Activated naive CD4-positive, alpha-beta T cell treated with anti-CD3 and anti-CD28 coated beads, Interleukin-2, amount 10 ng/mL, durations not matched to agents 7 days and 5 days (primary cell): ENCODE measurements at regions of chr12 and their contacts with region 1.

Region 1: DNA sequence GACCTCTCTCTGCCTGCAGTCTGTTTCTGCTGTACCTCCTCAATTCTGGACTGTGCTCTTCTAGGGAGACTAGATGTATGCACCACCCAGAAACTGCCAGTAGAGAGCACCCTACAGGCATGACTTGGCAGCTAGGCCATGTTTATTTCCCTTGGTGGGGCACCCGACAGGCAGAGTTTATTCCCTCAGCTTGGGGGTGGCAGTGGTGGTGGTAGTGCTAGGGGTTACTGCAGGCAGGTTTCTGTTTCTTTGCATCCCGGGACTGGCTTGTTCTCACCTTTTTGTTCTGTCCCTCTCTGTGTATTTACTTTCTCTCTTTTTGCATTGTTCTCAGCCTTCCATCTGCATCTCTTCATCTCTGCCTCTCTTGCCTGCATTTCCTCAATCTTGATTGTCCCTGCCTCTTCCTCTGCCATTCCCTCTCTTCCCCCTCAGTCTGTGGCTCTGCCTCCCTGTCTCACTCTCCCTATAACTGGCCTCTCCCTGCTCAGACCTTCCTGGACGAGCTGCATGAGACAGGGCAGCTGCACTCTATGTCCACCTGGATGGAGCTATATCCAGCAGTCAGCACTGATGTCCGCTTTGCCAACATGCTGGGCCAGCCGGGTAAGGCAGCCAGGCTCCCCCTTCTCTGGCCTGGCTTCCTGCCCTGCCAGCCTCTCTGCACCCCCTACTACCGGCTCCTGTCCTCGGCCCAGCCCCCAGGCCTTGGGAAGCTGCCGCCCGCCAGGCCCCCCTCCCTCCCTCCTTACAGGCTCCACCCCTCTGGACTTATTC is 13.8 kb downstream of the PRPF40B start:
- DNase-seq: peak; percentile 79
- H3K4me3 Mint-ChIP-seq: no peak overlapping the region
- H3K27ac Mint-ChIP-seq: no peak overlapping the region
- H3K4me1 Mint-ChIP-seq: peaks cover 7% of the 10 kb centered on the region
- H3K27me3 Mint-ChIP-seq: no peaks in the 10 kb centered on the region

Region 2: DNA sequence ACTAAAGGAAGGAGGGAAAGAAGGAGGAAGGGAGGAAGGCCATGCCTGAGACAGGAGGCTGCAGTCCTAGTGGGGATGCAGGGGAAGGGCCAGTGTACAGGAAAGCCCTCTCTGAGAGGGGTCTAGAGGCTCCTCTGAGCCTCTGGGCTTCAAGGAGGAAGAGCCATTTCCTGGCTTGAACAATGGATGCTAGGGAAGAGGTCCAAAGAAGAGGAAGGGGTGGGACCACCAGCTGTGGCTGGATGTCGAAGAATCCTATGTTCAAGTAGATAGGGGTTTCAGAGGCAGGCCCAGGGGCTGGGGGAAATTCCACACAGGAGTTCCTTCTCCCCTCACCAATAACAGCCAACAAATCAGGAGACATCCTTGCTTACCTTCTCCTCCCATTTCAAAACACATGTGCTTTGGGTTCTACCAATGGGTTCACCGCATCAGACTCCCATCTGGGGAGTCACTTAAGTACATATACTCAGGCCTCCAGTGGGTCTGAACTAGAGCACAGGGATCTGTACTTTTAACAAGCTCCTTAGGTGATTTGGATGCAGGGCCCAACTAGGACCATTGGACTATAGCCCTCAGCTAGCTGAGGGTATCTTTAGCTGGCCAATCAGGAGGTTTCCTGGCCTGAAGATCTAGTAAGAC is 18.5 kb after region 1 on chr12:
- CTCF ChIA-PET with region 1: interaction called, 12 read pairs
- DNase-seq: no peak
- H3K4me3 Mint-ChIP-seq: no peak overlapping the region
- H3K27ac Mint-ChIP-seq: peak overlapping the region; percentile 3
- H3K4me1 Mint-ChIP-seq: peaks cover 28% of the 10 kb centered on the region
- H3K27me3 Mint-ChIP-seq: no peaks in the 10 kb centered on the region

Region 3: DNA sequence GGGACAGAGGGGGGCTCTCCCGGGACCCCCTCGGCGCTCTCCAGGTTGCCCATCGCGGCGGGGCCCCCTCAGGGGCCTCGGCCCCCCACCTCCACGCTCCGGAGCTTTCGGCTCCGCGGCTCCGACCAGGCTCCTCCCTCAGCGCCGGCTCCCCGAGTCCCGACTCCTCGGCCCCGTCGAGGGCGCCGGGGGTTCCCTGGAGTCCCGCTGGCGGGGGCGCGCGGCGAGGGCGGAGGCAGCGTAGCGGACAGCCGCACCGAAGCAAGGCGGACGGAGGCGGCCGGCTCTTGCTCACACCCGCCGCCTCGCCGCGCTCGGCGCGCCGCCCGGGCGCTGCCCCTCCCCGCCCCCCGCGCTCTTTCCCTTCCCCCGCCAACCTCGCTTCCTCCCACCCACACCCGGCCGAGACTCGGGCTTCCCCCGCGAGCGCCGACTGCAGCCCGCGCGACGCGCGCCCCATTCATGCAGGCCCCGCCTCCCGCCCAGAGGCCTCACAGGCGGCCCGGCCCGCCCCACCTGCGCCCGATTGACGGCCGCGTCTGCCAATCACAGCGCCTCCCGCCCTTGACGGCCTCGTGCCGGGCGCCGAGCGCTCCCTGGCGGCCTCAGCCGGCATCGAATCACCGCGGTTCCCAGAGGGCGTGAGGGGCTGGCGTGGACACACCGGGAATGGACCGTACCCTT is 70.1 kb after region 1 on chr12 and contains the start of gene FMNL3:
- CTCF ChIA-PET with region 1: interaction called, 370 read pairs
- DNase-seq: peak; percentile 98
- H3K4me3 Mint-ChIP-seq: peak within 1 kb of the TSS; percentile 92
- H3K27ac Mint-ChIP-seq: peak within 1 kb of the TSS; percentile 66
- H3K4me1 Mint-ChIP-seq: peaks cover 43% of the 10 kb centered on the region
- H3K27me3 Mint-ChIP-seq: peaks cover 44% of the 10 kb centered on the region

Region 4: DNA sequence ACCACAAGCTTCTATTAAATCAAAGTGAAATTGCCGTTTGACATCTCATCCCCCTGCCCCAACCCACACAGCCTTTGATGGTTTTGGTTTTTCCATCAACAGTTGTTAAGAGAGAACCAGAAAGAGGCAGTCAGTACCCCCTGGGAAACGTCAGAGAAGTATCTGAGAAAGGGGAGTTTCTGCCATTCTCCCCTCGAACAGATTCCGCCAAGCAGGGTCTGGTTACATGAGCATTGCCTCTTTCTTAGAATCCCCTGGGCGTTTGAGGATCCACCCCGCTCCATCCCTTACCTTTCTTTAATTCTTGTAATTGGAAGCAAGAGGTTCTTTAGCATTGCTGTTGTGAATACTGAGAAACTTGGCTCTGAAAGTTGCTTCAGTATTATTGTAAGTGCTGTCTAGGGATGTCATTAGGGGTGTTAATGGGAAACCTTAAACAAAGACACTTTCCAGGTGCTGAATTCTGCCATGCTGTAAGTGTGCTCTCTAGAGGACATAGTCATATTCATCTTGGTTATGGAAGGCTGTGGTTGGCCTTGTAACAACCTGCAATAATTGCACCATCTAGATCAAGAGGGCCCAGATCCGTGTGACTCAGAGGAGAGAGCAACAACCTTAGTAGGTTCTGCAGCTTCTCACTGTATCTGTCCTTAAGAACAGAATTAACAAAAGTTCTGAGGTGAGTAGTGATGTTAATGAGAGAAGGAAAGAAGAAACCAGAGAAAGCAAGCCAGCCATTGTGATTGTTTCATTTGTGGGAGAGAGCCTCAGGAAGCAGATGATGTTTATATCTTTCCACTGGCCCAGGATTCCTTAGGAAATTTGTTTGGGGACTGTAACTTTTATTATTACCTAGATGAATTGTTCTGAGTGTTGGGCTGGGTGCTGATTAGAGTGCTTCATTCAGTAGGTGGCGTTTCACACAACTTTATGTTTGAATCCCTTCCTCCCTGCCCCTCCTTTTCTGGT is 113.1 kb after region 1 on chr12:
- CTCF ChIA-PET with region 1: interaction called, 10 read pairs
- DNase-seq: peak; percentile 37
- H3K4me3 Mint-ChIP-seq: peak overlapping the region; percentile 10
- H3K27ac Mint-ChIP-seq: peak overlapping the region; percentile 78
- H3K4me1 Mint-ChIP-seq: peaks cover 66% of the 10 kb centered on the region
- H3K27me3 Mint-ChIP-seq: no peaks in the 10 kb centered on the region

Region 5: GRCh38 chr12:49776413-49776812 is 139.2 kb after region 1 on chr12:
- CTCF ChIA-PET with region 1: interaction called, 10 read pairs
- DNase-seq: peak; percentile 70
- H3K4me3 Mint-ChIP-seq: no peak overlapping the region
- H3K27ac Mint-ChIP-seq: no peak overlapping the region
- H3K4me1 Mint-ChIP-seq: peaks cover 10% of the 10 kb centered on the region
- H3K27me3 Mint-ChIP-seq: peaks cover 33% of the 10 kb centered on the region

Region 6: GRCh38 chr12:49909826-49910225 is 272.7 kb after region 1 on chr12:
- CTCF ChIA-PET with region 1: no interaction called
- DNase-seq: no peak
- H3K4me3 Mint-ChIP-seq: no peak overlapping the region
- H3K27ac Mint-ChIP-seq: no peak overlapping the region
- H3K4me1 Mint-ChIP-seq: no peaks in the 10 kb centered on the region
- H3K27me3 Mint-ChIP-seq: peaks cover 45% of the 10 kb centered on the region